CD8-positive, alpha-beta T cell (primary cell): ENCODE measurements at regions of chr13 and their contacts with region 1.

Region 1: GRCh38 chr13:29935309-29935981 is 85.0 kb upstream of the UBL3 start:
- DNase-seq: peak; percentile 40 to 90 (median 74)
- ATAC-seq: peak; percentile 95
- H3K4me3 ChIP-seq: peak overlapping the region; percentile 40 to 51
- H3K4me3 Mint-ChIP-seq: peak overlapping the region; percentile 86
- H3K27ac ChIP-seq: peak overlapping the region; percentile 29 to 47
- H3K27ac Mint-ChIP-seq: peak overlapping the region; percentile 96
- H3K4me1 ChIP-seq: peaks cover 44% of the 10 kb centered on the region
- H3K4me1 Mint-ChIP-seq: peaks cover 50% of the 10 kb centered on the region
- H3K27me3 ChIP-seq: no peaks in the 10 kb centered on the region
- H3K27me3 Mint-ChIP-seq: no peaks in the 10 kb centered on the region
- CTCF ChIP-seq: no peak

Region 2: DNA sequence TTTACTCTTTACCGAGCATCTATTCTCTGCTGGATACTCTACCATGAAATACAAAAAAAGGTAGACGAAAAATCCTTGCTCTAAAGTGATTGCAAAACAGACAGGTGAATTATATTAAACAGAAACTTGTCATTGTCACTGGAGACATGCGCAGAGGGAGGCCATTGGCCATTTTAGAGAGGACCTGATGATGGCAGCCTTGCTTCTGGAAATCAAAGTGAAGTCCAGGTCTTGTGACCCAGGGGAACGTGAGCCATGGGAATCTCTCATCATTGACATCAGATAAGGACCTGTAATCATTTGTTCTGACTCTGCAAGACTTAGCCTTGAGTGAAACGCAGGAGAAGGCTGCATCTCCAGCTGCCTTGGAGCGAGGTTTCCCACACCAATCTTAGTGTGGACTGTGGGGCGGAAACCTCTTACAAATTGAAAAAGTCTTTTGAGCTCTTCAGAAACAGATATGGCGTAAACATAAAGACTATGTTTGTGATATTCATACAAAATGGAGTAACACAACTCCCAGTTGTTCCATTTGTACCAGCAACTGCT is 1199.9 kb before region 1 on chr13:
- CTCF ChIA-PET with region 1: no interaction called
- POLR2A ChIA-PET with region 1: no interaction called
- intact Hi-C with region 1: no loop called
- DNase-seq: no peak
- ATAC-seq: no peak
- H3K4me3 ChIP-seq: no peak overlapping the region
- H3K4me3 Mint-ChIP-seq: no peak overlapping the region
- H3K27ac ChIP-seq: no peak overlapping the region
- H3K27ac Mint-ChIP-seq: no peak overlapping the region
- H3K4me1 ChIP-seq: no peaks in the 10 kb centered on the region
- H3K4me1 Mint-ChIP-seq: peaks cover 4% of the 10 kb centered on the region
- H3K27me3 ChIP-seq: no peaks in the 10 kb centered on the region
- H3K27me3 Mint-ChIP-seq: peaks cover 12% of the 10 kb centered on the region
- CTCF ChIP-seq: no peak

Region 3: GRCh38 chr13:29902101-29902952 is 33.1 kb before region 1 on chr13:
- CTCF ChIA-PET with region 1: interaction called, 4 read pairs
- POLR2A ChIA-PET with region 1: interaction called, 4 read pairs
- intact Hi-C with region 1: loop called in 1 of 2 experiments (anchors 5 kb)
- DNase-seq: peak; percentile 3 to 84 (median 34)
- ATAC-seq: peak; percentile 74
- H3K4me3 ChIP-seq: peak overlapping the region; percentile 31 to 40
- H3K4me3 Mint-ChIP-seq: peak overlapping the region; percentile 81
- H3K27ac ChIP-seq: peak overlapping the region; percentile 6 to 59
- H3K27ac Mint-ChIP-seq: peak overlapping the region; percentile 84
- H3K4me1 ChIP-seq: peaks cover 17% of the 10 kb centered on the region
- H3K4me1 Mint-ChIP-seq: peaks cover 18% of the 10 kb centered on the region
- H3K27me3 ChIP-seq: no peaks in the 10 kb centered on the region
- H3K27me3 Mint-ChIP-seq: no peaks in the 10 kb centered on the region
- CTCF ChIP-seq: no peak

Region 4: DNA sequence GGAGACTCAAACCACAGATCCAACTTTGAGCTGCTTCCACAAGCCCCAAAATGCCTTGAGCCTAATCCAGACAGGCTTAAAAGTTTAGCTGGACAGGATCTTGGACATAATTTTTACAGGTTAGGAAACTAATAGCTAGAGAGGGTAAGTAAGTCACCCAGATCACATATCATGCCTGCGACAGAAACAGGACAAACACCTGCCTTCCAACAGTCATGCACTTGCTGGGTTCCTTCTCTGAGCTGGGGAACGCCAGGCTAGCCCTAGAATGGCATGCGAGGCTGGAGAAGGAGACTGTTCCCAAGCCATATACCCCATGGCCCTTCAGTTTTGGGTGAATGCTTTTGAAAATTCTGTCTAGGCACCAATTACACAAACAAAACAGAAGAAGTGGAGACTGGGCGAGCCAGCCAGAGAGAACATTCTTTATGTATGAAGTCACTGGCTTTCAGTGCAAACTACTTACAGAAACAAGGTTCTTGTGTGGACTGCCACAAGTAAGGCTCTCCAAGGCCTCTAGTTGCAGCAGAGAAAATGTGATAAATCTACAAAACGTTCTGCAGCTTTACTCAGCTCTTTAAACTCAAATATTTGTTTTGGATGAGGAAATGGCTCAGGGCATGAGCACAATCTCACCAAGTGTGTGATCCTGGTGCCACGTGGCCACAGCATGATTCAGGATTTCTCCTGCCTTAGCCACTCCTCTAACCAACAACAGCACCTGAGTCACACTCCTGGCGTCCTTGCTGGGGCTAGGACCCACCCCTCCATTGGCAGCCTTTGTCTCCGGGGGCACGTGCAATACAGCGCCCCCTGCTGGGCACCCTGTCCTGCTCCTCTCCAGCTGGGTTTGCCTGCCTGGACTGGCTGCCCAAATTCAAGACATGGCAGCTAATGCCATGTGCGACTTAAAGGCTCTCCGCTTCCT is 11.6 kb before region 1 on chr13:
- CTCF ChIA-PET with region 1: interaction called, 59 read pairs
- POLR2A ChIA-PET with region 1: interaction called, 13 read pairs
- intact Hi-C with region 1: no loop called
- DNase-seq: peak in 8 of 9 experiments; percentile 30 to 74 (median 61)
- ATAC-seq: peak; percentile 80
- H3K4me3 ChIP-seq: no peak overlapping the region
- H3K4me3 Mint-ChIP-seq: no peak overlapping the region
- H3K27ac ChIP-seq: no peak overlapping the region
- H3K27ac Mint-ChIP-seq: no peak overlapping the region
- H3K4me1 ChIP-seq: no peaks in the 10 kb centered on the region
- H3K4me1 Mint-ChIP-seq: peaks cover 17% of the 10 kb centered on the region
- H3K27me3 ChIP-seq: no peaks in the 10 kb centered on the region
- H3K27me3 Mint-ChIP-seq: no peaks in the 10 kb centered on the region
- CTCF ChIP-seq: peak; percentile 64

Region 5: GRCh38 chr13:29954082-29955028 is 18.9 kb after region 1 on chr13:
- CTCF ChIA-PET with region 1: interaction called, 25 read pairs
- POLR2A ChIA-PET with region 1: interaction called, 27 read pairs
- intact Hi-C with region 1: loop called in 1 of 2 experiments (anchors 1 kb)
- DNase-seq: peak in 8 of 9 experiments; percentile 33 to 81 (median 58)
- ATAC-seq: peak; percentile 58
- H3K4me3 ChIP-seq: peak overlapping the region; percentile 35 to 46
- H3K4me3 Mint-ChIP-seq: peak overlapping the region; percentile 80
- H3K27ac ChIP-seq: peak overlapping the region; percentile 62 to 69
- H3K27ac Mint-ChIP-seq: peak overlapping the region; percentile 91
- H3K4me1 ChIP-seq: peaks cover 43% of the 10 kb centered on the region
- H3K4me1 Mint-ChIP-seq: peaks cover 54% of the 10 kb centered on the region
- H3K27me3 ChIP-seq: no peaks in the 10 kb centered on the region
- H3K27me3 Mint-ChIP-seq: peaks cover 2% of the 10 kb centered on the region
- CTCF ChIP-seq: no peak